ENCODE measurements at regions of chr18 and their contacts with region 1.

Region 1: DNA sequence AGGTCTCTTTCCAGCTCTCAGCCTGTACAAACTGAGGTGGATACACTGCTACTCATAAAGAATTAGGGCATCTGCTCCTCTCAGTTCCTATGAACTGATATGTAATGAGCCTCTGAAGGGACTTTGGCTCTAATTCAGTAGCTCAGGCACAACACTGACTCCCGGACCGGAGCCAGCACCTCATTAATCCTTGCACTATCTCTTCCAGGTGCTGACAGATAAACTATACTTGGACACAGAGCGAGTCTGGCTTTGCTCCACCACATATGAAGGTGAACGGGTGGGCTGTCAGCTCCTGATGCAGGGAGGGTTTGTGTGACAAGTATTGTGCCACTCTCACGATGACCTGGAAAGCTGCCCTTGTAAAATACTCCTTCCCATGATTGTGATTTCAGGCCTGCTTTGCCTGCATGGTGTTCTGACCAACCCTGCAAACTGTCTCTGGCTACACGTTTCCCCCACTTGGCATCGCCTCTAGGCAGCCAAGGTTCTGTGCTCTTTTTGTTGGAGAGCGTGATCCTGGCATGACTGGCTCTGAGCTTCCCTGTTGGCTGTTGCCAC is 111.6 kb upstream of the LMAN1 start:
- DNase-seq: peak; percentile 34
- ATAC-seq: peak; percentile 78 to 90

Region 2: GRCh38 chr18:59300676-59301285 is 169.9 kb before region 1 on chr18:
- intact Hi-C with region 1: no loop called
- DNase-seq: no peak
- ATAC-seq: no peak

Region 3: DNA sequence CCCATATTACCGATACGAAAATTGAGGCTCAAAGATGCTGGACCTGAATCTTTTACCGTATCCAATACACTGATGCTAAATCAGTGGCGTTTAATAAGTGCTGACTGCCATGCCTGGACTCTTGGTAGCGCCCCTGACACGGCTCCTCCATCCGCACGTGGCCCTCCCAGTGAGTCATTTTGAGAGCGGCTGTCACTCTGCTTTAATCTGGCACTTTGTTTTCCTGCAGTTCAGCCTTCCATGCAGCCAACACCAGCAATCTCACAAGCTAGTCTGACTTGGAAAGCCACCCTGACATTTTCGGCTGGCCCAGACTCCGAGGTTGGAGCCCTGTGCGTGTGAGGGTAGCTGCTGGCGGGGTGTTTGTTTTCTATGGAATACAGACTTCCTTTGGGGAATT is 43.6 kb after region 1 on chr18:
- intact Hi-C with region 1: loop called in 1 of 2 experiments (anchors 5 kb)
- DNase-seq: peak; percentile 71
- ATAC-seq: peak; percentile 75 to 79

Region 4: DNA sequence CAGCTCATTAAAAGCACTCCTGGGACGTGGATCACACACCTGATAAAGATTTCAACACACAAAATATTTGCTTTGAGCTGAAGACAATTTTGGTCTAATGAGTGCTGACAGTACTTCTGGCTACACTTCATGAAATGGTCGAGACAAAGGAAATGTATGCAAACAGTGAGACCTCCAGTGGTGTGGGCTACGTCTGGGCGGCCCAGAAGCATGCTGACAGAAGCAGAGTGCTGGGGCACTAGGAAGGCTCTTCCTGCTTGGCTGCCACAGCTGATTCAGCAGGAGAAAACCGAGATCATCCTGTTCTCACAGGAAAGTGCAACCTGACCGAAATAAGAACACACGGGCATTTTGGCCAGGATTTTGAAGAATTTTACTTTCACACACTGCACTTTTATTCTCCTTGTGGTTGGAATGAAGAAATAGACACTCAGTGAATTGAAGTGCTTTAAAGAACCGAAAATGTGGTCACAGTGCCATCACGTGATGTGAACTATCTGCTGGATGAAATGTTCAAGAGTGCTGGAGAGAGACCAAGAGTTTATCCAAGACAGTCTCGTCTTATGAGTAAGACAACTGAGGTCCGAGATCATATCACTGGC is 77.0 kb after region 1 on chr18:
- intact Hi-C with region 1: loop called in 1 of 2 experiments (anchors 2 kb)
- DNase-seq: no peak
- ATAC-seq: peak; percentile 73 to 85

Region 5: GRCh38 chr18:59623456-59624368 is 153.1 kb after region 1 on chr18:
- intact Hi-C with region 1: loop called (anchors 10 kb)
- DNase-seq: no peak
- ATAC-seq: peak; percentile 54 to 75

Region 6: GRCh38 chr18:60134806-60135205 is 664.2 kb after region 1 on chr18:
- intact Hi-C with region 1: no loop called
- DNase-seq: no peak
- ATAC-seq: no peak

Region 7: GRCh38 chr18:60377778-60378469 is 907.3 kb after region 1 on chr18:
- intact Hi-C with region 1: no loop called
- DNase-seq: no peak
- ATAC-seq: no peak